ENCODE measurements at regions of chr5 and their contacts with region 1.

Region 1: DNA sequence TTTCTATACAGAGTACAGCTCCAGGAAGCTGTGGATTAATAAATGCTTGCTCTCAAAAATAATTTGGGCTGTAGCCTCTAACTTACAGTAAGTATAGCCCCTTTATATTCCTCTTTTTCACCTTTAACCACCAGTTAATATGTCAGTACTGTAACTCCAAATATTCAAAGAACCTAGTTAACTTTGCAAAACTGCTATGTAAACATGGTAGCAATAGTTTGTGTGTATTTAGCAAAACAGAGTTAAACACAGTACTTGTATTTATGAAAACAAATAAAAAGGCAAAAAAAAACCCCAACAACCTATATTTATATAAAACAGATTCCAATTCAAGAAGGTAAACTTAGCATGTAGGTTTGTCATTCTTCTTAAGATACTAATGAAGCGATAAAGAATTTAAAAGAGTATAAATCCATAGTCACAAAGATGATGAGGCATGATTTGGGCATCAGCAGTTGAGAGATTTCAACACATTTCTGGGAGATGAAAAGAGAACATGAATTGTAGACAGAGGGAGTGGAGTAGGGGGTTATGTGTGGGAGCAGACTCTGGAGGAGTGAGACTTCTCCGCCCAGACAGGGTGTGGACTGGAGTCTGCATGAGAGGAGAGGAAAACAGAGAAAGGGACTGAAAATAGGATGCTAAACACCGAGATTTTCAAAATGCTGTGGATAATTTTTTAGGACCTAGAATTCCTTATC is 47.0 kb upstream of the F2RL1 start:
- DNase-seq: no peak
- ATAC-seq: no peak
- H3K4me3 ChIP-seq: no peak overlapping the region
- H3K27ac ChIP-seq: no peak overlapping the region
- H3K4me1 ChIP-seq: no peaks in the 10 kb centered on the region
- H3K27me3 ChIP-seq: no peaks in the 10 kb centered on the region
- CTCF ChIP-seq: no peak
- EP300 ChIP-seq: no peak
- POLR2A ChIP-seq: no peak
- RAD21 ChIP-seq: no peak

Region 2: DNA sequence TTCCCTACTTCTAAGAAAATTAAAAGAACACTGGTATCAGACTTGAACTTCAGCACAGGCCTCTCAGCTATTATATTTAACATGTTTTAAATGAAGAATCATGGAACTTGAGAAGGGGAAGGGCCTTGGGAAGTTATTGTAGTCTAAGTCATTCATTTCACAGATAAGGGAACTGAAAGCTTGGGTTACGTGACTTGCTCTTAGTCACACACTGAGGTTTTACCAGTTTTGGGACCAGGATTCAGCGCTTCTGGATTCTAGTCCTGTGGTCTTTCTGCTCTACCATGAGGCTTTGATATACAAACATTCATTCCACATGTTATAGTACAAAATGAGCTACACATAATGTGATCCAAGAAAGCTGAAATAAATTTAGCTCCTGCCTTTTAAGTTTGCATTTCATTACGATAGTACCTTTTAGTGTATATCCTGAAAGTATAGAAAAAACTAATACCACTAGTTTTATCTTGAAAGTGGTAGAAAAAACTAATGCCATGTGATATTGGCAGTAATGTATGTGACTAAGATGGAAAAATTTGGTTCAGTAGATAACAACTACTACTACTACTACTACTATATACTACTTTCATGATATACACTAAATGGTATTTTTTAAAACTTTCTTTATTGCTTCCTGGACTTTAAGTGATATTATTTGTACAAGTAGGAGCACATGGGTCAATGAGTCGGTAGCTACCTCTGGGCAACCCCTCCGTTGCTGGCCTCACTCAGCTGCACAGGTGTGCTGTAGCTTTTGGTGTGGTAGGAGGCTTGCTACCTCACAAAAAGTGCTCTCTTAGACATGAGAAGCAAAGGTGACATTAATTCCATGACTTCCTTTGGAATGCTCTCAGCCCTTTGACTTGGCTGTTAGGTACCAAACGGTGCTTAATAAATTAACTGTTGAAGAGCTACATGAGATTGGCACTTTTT is 189.4 kb before region 1 on chr5:
- CTCF ChIA-PET with region 1: interaction called, 35 read pairs
- POLR2A ChIA-PET with region 1: interaction called, 6 read pairs
- RAD21 ChIA-PET with region 1: interaction called, 22 read pairs
- SMC1A ChIA-PET with region 1: interaction called, 28 read pairs
- in situ Hi-C with region 1: no loop called
- intact Hi-C with region 1: no loop called
- DNase-seq: peak; percentile 79
- ATAC-seq: peak; percentile 98
- H3K4me3 ChIP-seq: no peak overlapping the region
- H3K27ac ChIP-seq: peak overlapping the region; percentile 66
- H3K4me1 ChIP-seq: peaks cover 14% of the 10 kb centered on the region; the same call in 1 of the 2 replicates
- H3K27me3 ChIP-seq: no peaks in the 10 kb centered on the region
- CTCF ChIP-seq: no peak
- EP300 ChIP-seq: peak; percentile 81 to 98; a peak in 3 of 4 replicates
- POLR2A ChIP-seq: no peak
- RAD21 ChIP-seq: no peak

Region 3: DNA sequence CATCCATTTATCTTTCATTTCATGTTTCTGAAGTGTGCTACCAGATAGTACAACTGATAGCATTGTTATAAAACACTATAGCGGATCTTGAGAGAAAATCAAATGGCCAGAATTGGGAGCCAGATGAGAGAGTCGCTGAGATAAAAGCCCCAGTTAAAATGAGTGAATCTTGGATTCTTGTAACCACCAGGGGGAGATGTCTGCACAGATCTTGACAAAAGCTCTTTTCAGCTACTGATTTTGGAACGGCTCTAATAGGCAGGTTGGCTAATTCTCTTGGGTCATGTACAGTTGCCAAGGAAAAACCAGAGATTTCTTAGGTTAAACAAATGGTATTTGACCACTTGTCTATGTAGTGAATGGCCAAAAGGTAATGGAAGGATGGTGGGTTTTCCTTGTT is 170.4 kb before region 1 on chr5:
- CTCF ChIA-PET with region 1: interaction called, 239 read pairs
- POLR2A ChIA-PET with region 1: interaction called, 3 read pairs
- RAD21 ChIA-PET with region 1: interaction called, 166 read pairs
- SMC1A ChIA-PET with region 1: interaction called, 154 read pairs
- in situ Hi-C with region 1: loop called (anchors 5 kb)
- intact Hi-C with region 1: loop called (anchors 1 kb)
- DNase-seq: no peak
- ATAC-seq: peak; percentile 89
- H3K4me3 ChIP-seq: no peak overlapping the region
- H3K27ac ChIP-seq: no peak overlapping the region
- H3K4me1 ChIP-seq: no peaks in the 10 kb centered on the region
- H3K27me3 ChIP-seq: no peaks in the 10 kb centered on the region
- CTCF ChIP-seq: peak; percentile 58 to 72 (median 71); a peak in 5 of 6 replicates
- EP300 ChIP-seq: no peak
- POLR2A ChIP-seq: no peak
- RAD21 ChIP-seq: peak; percentile 94

Region 4: DNA sequence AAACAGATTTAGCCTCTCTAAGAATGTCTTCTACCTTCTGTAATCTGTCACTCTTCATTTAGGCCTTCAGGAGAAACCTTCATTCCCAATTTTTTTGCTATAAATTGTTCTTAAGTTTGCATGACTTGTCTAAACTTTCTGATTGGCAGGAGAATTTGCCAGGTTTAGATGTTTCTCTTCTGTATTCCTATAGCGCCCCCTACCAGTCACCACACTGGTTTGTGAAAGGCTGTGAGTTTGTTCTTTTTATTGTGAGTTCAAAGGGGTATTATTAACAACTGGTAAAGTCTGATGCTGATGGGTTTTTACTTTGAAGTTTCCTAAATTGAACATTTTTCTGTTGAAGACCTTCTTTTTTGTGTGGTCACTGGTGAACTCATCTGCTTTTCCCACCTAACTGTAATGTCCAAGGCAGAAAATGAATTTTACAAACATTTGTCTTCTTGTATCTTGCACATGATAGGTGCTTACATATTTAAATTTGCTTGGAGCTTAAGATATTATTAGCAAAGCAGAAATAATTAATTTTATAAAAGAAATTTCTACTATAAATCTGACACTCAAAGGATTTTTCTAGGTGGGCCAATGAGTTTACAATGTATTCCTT is 130.2 kb before region 1 on chr5:
- CTCF ChIA-PET with region 1: interaction called, 33 read pairs
- POLR2A ChIA-PET with region 1: no interaction called
- RAD21 ChIA-PET with region 1: interaction called, 18 read pairs
- SMC1A ChIA-PET with region 1: interaction called, 19 read pairs
- in situ Hi-C with region 1: no loop called
- intact Hi-C with region 1: loop called (anchors 1 kb)
- DNase-seq: peak; percentile 15
- ATAC-seq: peak; percentile 89
- H3K4me3 ChIP-seq: no peak overlapping the region
- H3K27ac ChIP-seq: no peak overlapping the region
- H3K4me1 ChIP-seq: peaks cover 11% of the 10 kb centered on the region; the same call in 1 of the 2 replicates
- H3K27me3 ChIP-seq: no peaks in the 10 kb centered on the region
- CTCF ChIP-seq: peak; percentile 74 to 82 (median 79)
- EP300 ChIP-seq: no peak
- POLR2A ChIP-seq: no peak
- RAD21 ChIP-seq: peak; percentile 94

Region 5: DNA sequence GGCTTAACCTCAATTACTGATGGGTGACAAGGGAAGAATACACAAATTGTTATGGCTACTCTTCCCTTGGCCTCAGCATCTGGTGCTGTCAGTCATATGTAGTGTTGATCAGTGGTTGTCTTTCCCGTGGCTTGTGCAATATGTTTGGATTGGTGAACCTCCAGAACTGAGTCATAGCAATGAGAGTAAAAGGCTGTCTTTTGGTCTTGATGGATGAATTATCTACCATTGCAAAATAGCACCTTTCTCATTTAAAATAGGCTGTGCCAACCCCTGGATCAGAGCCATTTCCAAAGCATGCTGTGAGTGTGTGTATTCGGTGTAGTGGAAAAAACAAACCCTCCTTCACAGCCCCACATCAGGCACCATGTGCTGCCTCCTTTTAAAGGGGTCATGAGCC is 70.6 kb before region 1 on chr5:
- CTCF ChIA-PET with region 1: interaction called, 20 read pairs
- POLR2A ChIA-PET with region 1: interaction called, 4 read pairs
- RAD21 ChIA-PET with region 1: interaction called, 19 read pairs
- SMC1A ChIA-PET with region 1: interaction called, 27 read pairs
- in situ Hi-C with region 1: no loop called
- intact Hi-C with region 1: no loop called
- DNase-seq: no peak
- ATAC-seq: no peak
- H3K4me3 ChIP-seq: no peak overlapping the region
- H3K27ac ChIP-seq: no peak overlapping the region
- H3K4me1 ChIP-seq: no peaks in the 10 kb centered on the region
- H3K27me3 ChIP-seq: no peaks in the 10 kb centered on the region
- CTCF ChIP-seq: no peak
- EP300 ChIP-seq: no peak
- POLR2A ChIP-seq: no peak
- RAD21 ChIP-seq: no peak

Region 6: DNA sequence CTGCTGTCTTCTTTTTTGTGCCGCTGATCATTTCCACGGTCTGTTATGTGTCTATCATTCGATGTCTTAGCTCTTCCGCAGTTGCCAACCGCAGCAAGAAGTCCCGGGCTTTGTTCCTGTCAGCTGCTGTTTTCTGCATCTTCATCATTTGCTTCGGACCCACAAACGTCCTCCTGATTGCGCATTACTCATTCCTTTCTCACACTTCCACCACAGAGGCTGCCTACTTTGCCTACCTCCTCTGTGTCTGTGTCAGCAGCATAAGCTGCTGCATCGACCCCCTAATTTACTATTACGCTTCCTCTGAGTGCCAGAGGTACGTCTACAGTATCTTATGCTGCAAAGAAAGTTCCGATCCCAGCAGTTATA is 38.8 kb before region 1 on chr5:
- CTCF ChIA-PET with region 1: interaction called, 80 read pairs
- POLR2A ChIA-PET with region 1: interaction called, 5 read pairs
- RAD21 ChIA-PET with region 1: interaction called, 76 read pairs
- SMC1A ChIA-PET with region 1: interaction called, 63 read pairs
- in situ Hi-C with region 1: no loop called
- intact Hi-C with region 1: loop called (anchors 2 kb)
- DNase-seq: peak; percentile 96
- ATAC-seq: peak; percentile 86
- H3K4me3 ChIP-seq: peak overlapping the region; percentile 50
- H3K27ac ChIP-seq: peak overlapping the region; percentile 61; the same call in 1 of the 2 replicates
- H3K4me1 ChIP-seq: peaks cover 29% of the 10 kb centered on the region
- H3K27me3 ChIP-seq: no peaks in the 10 kb centered on the region
- CTCF ChIP-seq: no peak
- EP300 ChIP-seq: peak; percentile 99 to 100
- POLR2A ChIP-seq: no peak
- RAD21 ChIP-seq: no peak

Region 7: GRCh38 chr5:76926329-76927105 is 154.7 kb after region 1 on chr5:
- CTCF ChIA-PET with region 1: no interaction called
- POLR2A ChIA-PET with region 1: no interaction called
- RAD21 ChIA-PET with region 1: no interaction called
- SMC1A ChIA-PET with region 1: no interaction called
- in situ Hi-C with region 1: no loop called
- intact Hi-C with region 1: no loop called
- DNase-seq: no peak
- ATAC-seq: no peak
- H3K4me3 ChIP-seq: no peak overlapping the region
- H3K27ac ChIP-seq: no peak overlapping the region
- H3K4me1 ChIP-seq: no peaks in the 10 kb centered on the region
- H3K27me3 ChIP-seq: 0 out of 4 replicates have a peak, but pooled peaks cover 0 to 2% of the 10 kb centered on the region in 2 experiments
- CTCF ChIP-seq: no peak
- EP300 ChIP-seq: no peak
- POLR2A ChIP-seq: no peak
- RAD21 ChIP-seq: no peak

Measured in GM12878 (cell line).